ENCODE measurements at regions of chr13 and their contacts with region 1.

Region 1: GRCh38 chr13:19959831-19960652 is 1.5 kb downstream of the ZMYM2 start:
- DNase-seq: peak; percentile 91
- H3K4me3 ChIP-seq: peak overlapping the region; percentile 74 to 97 (median 97)
- H3K27ac ChIP-seq: peak overlapping the region; percentile 82
- H3K4me1 ChIP-seq: peaks cover 25% of the 10 kb centered on the region
- H3K27me3 ChIP-seq: peaks cover 3 to 10% of the 10 kb centered on the region in 2 experiments
- CTCF ChIP-seq: peak; percentile 70 to 75
- POLR2A ChIP-seq: no peak

Region 2: GRCh38 chr13:19289180-19289579 is 670.9 kb before region 1 on chr13:
- CTCF ChIA-PET with region 1: no interaction called
- POLR2A ChIA-PET with region 1: no interaction called
- dilution Hi-C with region 1: no loop called
- intact Hi-C with region 1: no loop called
- DNase-seq: no peak
- H3K4me3 ChIP-seq: no peak overlapping the region
- H3K27ac ChIP-seq: no peak overlapping the region
- H3K4me1 ChIP-seq: no peaks in the 10 kb centered on the region
- H3K27me3 ChIP-seq: no peaks in the 10 kb centered on the region
- CTCF ChIP-seq: no peak
- POLR2A ChIP-seq: no peak

Region 3: GRCh38 chr13:19782049-19782726 is 177.9 kb before region 1 on chr13:
- CTCF ChIA-PET with region 1: no interaction called
- POLR2A ChIA-PET with region 1: no interaction called
- dilution Hi-C with region 1: no loop called
- intact Hi-C with region 1: loop called (anchors 2 kb)
- DNase-seq: peak; percentile 75
- H3K4me3 ChIP-seq: peak overlapping the region; percentile 78 to 95 (median 93)
- H3K27ac ChIP-seq: peak overlapping the region; percentile 85
- H3K4me1 ChIP-seq: peaks cover 3% of the 10 kb centered on the region
- H3K27me3 ChIP-seq: no peaks in the 10 kb centered on the region
- CTCF ChIP-seq: no peak
- POLR2A ChIP-seq: no peak

Region 4: DNA sequence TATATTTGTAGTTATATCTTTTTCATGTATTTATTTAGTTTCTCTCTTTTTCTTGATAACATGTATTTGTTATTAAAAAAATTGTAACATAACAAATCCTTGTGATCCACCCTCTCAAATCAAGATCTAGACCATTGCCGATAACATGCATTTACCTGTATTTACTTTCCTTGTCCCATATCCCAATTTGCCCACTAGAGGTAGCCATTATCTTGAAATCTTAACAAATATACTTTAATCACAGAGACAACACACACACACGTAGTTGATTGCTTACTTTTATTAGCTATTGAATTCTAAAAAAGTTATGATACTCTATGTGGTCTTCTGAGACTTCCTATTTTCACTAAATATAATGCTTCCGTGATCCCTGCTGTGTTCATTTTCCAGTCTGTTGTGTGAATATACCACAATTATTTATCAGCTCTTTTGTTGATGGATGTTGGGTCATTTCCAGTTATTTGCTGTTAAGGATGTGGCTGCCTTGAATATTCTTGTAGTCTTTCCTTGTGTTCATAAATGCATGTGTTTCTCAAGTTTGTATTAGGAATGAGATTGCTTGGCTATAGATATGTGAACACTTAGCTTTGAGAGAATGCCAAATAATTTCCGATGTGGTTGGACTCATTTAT is 32.8 kb before region 1 on chr13:
- CTCF ChIA-PET with region 1: interaction called, 30 read pairs
- POLR2A ChIA-PET with region 1: no interaction called
- dilution Hi-C with region 1: no loop called
- intact Hi-C with region 1: loop called (anchors 2 kb)
- DNase-seq: peak; percentile 59
- H3K4me3 ChIP-seq: no peak overlapping the region
- H3K27ac ChIP-seq: no peak overlapping the region
- H3K4me1 ChIP-seq: no peaks in the 10 kb centered on the region
- H3K27me3 ChIP-seq: no peaks in the 10 kb centered on the region
- CTCF ChIP-seq: peak in 1 of 2 donors; percentile 30
- POLR2A ChIP-seq: no peak

Region 5: DNA sequence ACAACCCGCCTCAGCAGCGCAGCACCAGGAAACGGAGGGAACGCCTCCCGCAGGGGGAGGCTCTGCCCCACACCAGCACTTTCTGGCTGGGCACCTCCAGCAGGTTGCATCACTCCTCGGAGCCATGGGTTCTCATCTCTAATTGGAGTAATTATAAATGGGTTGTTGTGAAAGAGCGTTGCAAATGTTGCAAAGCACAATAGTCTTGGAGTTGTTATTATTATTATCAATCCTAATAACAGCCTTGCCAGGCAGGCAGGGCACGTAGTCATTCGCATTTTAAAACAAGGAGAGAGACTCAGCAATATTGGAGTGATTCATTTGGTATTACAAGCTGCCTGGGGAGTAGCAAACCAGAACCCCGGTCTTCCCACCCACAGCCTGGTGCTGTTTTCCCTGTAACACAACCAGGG is 380.7 kb after region 1 on chr13:
- CTCF ChIA-PET with region 1: no interaction called
- POLR2A ChIA-PET with region 1: no interaction called
- dilution Hi-C with region 1: no loop called
- intact Hi-C with region 1: no loop called
- DNase-seq: no peak
- H3K4me3 ChIP-seq: no peak overlapping the region
- H3K27ac ChIP-seq: no peak overlapping the region
- H3K4me1 ChIP-seq: no peaks in the 10 kb centered on the region
- H3K27me3 ChIP-seq: no peaks in the 10 kb centered on the region
- CTCF ChIP-seq: no peak
- POLR2A ChIP-seq: no peak

Region 6: GRCh38 chr13:20378721-20379120 is 418.7 kb after region 1 on chr13:
- CTCF ChIA-PET with region 1: no interaction called
- POLR2A ChIA-PET with region 1: no interaction called
- dilution Hi-C with region 1: no loop called
- intact Hi-C with region 1: no loop called
- DNase-seq: no peak
- H3K4me3 ChIP-seq: no peak overlapping the region
- H3K27ac ChIP-seq: no peak overlapping the region
- H3K4me1 ChIP-seq: no peaks in the 10 kb centered on the region
- H3K27me3 ChIP-seq: peaks cover 3 to 7% of the 10 kb centered on the region in 2 experiments
- CTCF ChIP-seq: no peak
- POLR2A ChIP-seq: no peak

Region 7: GRCh38 chr13:20534038-20534608 is 574.1 kb after region 1 on chr13:
- CTCF ChIA-PET with region 1: no interaction called
- POLR2A ChIA-PET with region 1: no interaction called
- dilution Hi-C with region 1: no loop called
- intact Hi-C with region 1: no loop called
- DNase-seq: no peak
- H3K4me3 ChIP-seq: no peak overlapping the region
- H3K27ac ChIP-seq: no peak overlapping the region
- H3K4me1 ChIP-seq: no peaks in the 10 kb centered on the region
- H3K27me3 ChIP-seq: no peaks in the 10 kb centered on the region
- CTCF ChIP-seq: no peak
- POLR2A ChIP-seq: no peak

Measured in endothelial cell of umbilical vein (primary cell).